ENCODE measurements at regions of chr6 and their contacts with region 1.

Region 1: DNA sequence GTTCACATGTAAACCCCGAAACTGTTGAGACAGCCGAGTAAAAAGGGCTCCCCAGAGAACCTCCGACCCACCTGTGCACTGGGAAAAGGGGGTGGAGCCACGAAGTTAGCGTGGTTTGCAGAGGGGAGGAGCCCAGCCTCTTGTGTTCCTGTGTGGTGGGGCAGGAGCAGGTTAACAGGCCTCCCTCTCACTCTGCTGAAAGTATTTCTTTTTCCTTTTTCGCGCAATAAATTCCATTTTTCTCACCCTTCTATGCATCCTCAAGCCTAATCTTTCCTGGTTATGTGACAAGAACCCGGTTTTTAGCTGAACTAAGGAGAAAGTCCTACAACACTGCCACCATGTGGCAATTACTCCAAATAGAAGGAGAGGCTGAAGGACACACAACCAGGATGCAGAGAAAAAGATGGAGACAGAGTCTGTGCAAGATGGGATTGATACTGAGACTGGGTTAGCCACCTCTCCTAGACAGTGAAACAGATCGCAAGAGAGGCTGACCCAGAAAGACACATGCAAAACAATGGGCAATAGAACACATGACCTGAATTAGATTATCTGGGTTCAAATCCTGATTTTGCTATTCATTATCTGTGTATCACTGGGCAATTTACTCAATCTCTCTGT is 168.7 kb upstream of the PRSS16 start:
- DNase-seq: peak; percentile 79
- H3K4me3 Mint-ChIP-seq: peak overlapping the region; percentile 76
- H3K27ac Mint-ChIP-seq: no peak overlapping the region
- H3K4me1 Mint-ChIP-seq: peaks cover 8% of the 10 kb centered on the region
- H3K27me3 Mint-ChIP-seq: peaks cover 51% of the 10 kb centered on the region

Region 2: DNA sequence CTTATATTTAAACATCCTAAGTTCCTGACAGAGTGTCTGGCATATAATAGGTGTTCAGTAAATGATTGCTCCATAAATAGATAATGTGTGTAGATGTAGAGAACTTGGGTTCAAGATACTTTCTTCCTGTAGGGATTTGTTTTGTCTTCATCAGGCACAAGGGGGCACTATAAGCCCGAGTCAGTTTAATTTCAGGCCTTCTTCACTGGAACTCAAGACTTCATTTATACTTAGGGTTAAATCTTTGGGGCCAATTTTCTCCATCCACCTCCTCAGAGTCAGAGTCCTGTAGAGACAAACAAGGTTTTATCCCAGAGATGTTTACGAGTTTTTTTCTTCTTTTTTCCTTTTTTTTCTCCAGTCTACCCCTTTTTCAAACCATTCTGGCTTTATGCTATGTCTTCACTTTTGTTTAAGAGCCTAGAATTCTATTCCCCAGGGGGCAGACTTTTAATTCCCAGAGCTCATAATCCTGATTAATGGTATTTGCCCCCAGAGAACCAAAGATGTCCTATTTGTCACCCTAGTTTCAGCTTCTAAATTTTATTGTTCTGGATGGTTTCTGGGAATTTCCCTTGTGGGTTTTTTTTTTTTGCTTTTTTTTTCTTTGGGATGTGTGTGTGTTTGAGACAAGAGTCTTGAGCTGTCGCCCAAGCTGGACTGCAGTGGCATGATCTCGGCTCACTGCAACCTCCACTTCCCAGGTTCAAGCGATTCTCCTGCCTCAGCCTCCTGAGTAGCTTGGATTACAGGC is 903.2 kb before region 1 on chr6:
- intact Hi-C with region 1: loop called (anchors 5 kb)
- DNase-seq: peak; percentile 91
- H3K4me3 Mint-ChIP-seq: peak overlapping the region; percentile 40
- H3K27ac Mint-ChIP-seq: peak overlapping the region; percentile 63
- H3K4me1 Mint-ChIP-seq: peaks cover 45% of the 10 kb centered on the region
- H3K27me3 Mint-ChIP-seq: no peaks in the 10 kb centered on the region

Region 3: DNA sequence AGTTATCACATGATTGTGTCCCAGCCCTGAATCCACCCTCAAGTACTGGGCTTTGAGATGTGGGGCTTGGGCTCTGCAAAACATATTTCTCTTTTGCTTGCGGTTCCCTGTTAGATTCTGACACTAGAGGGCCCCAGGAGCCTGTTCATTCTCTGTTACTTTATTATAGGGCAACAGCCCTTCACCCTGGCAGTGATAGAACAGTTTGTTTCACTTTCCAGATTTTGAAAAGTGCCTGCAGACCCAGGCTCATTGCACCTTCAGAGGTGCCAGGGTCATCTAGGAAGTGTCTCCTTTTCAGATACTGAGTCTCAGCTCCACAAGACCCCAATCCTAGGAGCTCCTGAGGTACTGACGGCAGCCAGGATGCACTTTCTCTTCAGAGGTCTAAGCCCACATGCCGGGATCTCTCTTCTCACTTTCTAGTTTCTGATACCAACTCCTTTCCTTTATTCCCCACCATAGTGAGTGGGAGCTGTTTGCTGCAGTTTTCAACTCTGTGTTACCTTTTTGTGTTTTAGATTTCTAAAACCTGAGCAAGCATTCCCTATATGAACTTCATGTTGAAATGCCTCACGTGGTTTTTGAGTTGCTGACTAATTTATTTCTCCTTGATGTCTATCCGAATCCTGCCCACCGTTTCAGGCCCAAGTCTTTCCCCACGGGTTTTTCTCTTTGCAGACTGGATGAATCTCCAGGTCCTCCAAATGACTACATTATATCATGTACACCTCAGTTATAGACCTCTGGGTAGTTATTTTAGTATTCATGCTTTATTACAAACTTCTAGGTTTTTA is 471.2 kb before region 1 on chr6:
- intact Hi-C with region 1: loop called (anchors 1 kb)
- DNase-seq: peak; percentile 91
- H3K4me3 Mint-ChIP-seq: peak overlapping the region; percentile 12
- H3K27ac Mint-ChIP-seq: no peak overlapping the region
- H3K4me1 Mint-ChIP-seq: peaks cover 12% of the 10 kb centered on the region
- H3K27me3 Mint-ChIP-seq: peaks cover 16% of the 10 kb centered on the region

Region 4: GRCh38 chr6:27049863-27050781 is 28.7 kb before region 1 on chr6:
- intact Hi-C with region 1: no loop called
- DNase-seq: no peak
- H3K4me3 Mint-ChIP-seq: no peak overlapping the region
- H3K27ac Mint-ChIP-seq: no peak overlapping the region
- H3K4me1 Mint-ChIP-seq: no peaks in the 10 kb centered on the region
- H3K27me3 Mint-ChIP-seq: peaks cover 8% of the 10 kb centered on the region

Region 5: DNA sequence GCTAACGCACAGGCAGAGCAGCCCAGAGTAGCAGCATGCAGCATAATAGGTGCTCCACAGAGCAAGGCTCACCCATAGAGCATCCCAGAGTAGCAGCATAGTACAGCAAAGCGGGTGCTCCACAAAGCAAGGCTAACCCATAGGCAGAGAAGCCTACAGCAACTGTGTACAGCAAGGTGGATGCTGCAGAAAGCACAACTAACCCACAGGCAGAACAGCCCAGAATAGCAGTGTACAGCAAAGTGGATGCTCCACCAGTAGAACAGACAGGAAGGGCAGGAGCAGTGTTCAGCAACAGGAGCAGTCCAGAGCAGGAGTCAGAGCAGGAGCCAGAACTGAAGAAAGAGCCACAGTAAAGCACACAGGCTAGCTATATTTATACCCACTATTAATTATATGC is 35.9 kb after region 1 on chr6:
- intact Hi-C with region 1: no loop called
- DNase-seq: peak; percentile 52
- H3K4me3 Mint-ChIP-seq: no peak overlapping the region
- H3K27ac Mint-ChIP-seq: no peak overlapping the region
- H3K4me1 Mint-ChIP-seq: no peaks in the 10 kb centered on the region
- H3K27me3 Mint-ChIP-seq: peaks cover 4% of the 10 kb centered on the region

Measured in activated CD4-positive, alpha-beta T cell treated with anti-CD3 and anti-CD28 coated beads, Interleukin-2, amount 10 ng/mL, durations not matched to agents 24 days and 14 days (primary cell).